Right cardiac atrium (tissue), 5 donors: ENCODE measurements at regions of chr4 and their contacts with region 1.

Region 1: GRCh38 chr4:40316782-40317635 is 18.1 kb upstream of the CHRNA9 start:
- DNase-seq: no peak
- ATAC-seq: peak; percentile 78 to 89
- H3K4me3 ChIP-seq: peak overlapping the region; percentile 46
- H3K27ac ChIP-seq: peak overlapping the region; percentile 22
- H3K4me1 ChIP-seq: peaks cover 3% of the 10 kb centered on the region
- H3K27me3 ChIP-seq: no peaks in the 10 kb centered on the region

Region 2: GRCh38 chr4:40149960-40150385 is 167.0 kb before region 1 on chr4:
- intact Hi-C with region 1: loop called in 1 of 4 experiments (anchors 5 kb)
- DNase-seq: peak in 2 of 3 donors; percentile 23 to 62
- ATAC-seq: peak; percentile 55 to 68
- H3K4me3 ChIP-seq: no peak overlapping the region
- H3K27ac ChIP-seq: no peak overlapping the region
- H3K4me1 ChIP-seq: no peaks in the 10 kb centered on the region
- H3K27me3 ChIP-seq: no peaks in the 10 kb centered on the region